GM10248 (cell line): ENCODE measurements at regions of chr13 and their contacts with region 1.

Region 1: GRCh38 chr13:30142486-30143211 is 164.7 kb downstream of the KATNAL1 start:
- DNase-seq: no peak
- CTCF ChIP-seq: no peak

Region 2: GRCh38 chr13:30033681-30034457 is 108.8 kb before region 1 on chr13:
- CTCF ChIA-PET with region 1: no interaction called
- POLR2A ChIA-PET with region 1: no interaction called
- DNase-seq: no peak
- CTCF ChIP-seq: no peak

Region 3: GRCh38 chr13:30158774-30159445 is 16.3 kb after region 1 on chr13:
- CTCF ChIA-PET with region 1: interaction called, 36 read pairs
- POLR2A ChIA-PET with region 1: no interaction called
- DNase-seq: no peak
- CTCF ChIP-seq: peak; percentile 22

Region 4: GRCh38 chr13:30175166-30175565 is 32.5 kb after region 1 on chr13:
- CTCF ChIA-PET with region 1: interaction called, 10 read pairs
- POLR2A ChIA-PET with region 1: no interaction called
- DNase-seq: no peak
- CTCF ChIP-seq: no peak